Mammary epithelial cell (primary cell): ENCODE measurements at regions of chr5 and their contacts with region 1.

Region 1: GRCh38 chr5:159444441-159445082 is 114.3 kb upstream of the IL12B start:
- DNase-seq: peak; percentile 60
- H3K4me3 ChIP-seq: no peak overlapping the region
- H3K27ac ChIP-seq: no peak overlapping the region
- H3K4me1 ChIP-seq: no peaks in the 10 kb centered on the region
- H3K27me3 ChIP-seq: no peaks in the 10 kb centered on the region
- CTCF ChIP-seq: peak; percentile 30 to 54

Region 2: DNA sequence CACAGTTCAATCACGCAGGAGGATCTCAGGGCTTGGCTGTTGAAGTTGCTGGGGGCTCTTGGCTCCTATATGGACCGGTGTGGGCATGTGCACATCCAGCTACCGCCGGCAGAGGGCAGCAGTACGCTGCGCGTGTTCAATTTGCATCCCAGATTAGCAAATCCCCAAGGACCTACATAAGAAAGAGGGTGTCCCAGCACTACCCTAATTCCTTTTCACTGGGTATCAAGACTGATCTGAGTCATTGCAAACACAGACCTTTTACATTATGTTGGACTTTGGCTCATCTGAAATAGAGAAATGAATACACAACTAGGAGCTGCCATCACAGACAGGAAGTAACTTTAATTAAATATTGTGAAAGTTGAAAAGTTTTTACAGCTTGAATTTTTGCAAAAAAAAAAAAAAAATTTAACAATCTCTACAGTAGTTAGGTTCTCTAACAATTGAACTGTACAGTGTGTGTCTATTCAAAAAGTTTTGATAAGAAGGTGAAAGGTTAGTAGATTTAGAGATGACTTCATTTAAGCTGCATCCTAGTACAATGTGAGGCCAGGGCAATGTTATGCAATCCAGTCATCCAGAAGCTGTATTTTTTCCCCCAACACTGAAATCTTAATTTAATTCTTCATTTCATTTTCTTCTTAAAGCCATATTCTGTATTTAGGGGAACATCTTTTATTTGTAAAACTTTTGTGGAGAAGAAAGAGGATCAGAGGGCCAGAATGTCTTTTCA is 748.8 kb before region 1 on chr5:
- CTCF ChIA-PET with region 1: no interaction called
- dilution Hi-C with region 1: no loop called
- in situ Hi-C with region 1: no loop called
- intact Hi-C with region 1: no loop called
- DNase-seq: peak; percentile 17
- H3K4me3 ChIP-seq: no peak overlapping the region
- H3K27ac ChIP-seq: no peak overlapping the region
- H3K4me1 ChIP-seq: no peaks in the 10 kb centered on the region
- H3K27me3 ChIP-seq: peaks cover 2% of the 10 kb centered on the region
- CTCF ChIP-seq: peak; percentile 90 to 97

Region 3: GRCh38 chr5:159286420-159287035 is 158.0 kb before region 1 on chr5:
- CTCF ChIA-PET with region 1: no interaction called
- dilution Hi-C with region 1: no loop called
- in situ Hi-C with region 1: no loop called
- intact Hi-C with region 1: loop called (anchors 2 kb)
- DNase-seq: peak; percentile 35
- H3K4me3 ChIP-seq: no peak overlapping the region
- H3K27ac ChIP-seq: no peak overlapping the region
- H3K4me1 ChIP-seq: no peaks in the 10 kb centered on the region
- H3K27me3 ChIP-seq: no peaks in the 10 kb centered on the region
- CTCF ChIP-seq: peak; percentile 30 to 57

Region 4: GRCh38 chr5:159331093-159331973 is 113.2 kb before region 1 on chr5:
- CTCF ChIA-PET with region 1: no interaction called
- dilution Hi-C with region 1: no loop called
- in situ Hi-C with region 1: no loop called
- intact Hi-C with region 1: loop called (anchors 1 kb)
- DNase-seq: no peak
- H3K4me3 ChIP-seq: peak overlapping the region; percentile 37 to 56 (median 45)
- H3K27ac ChIP-seq: no peak overlapping the region
- H3K4me1 ChIP-seq: peaks cover 9% of the 10 kb centered on the region
- H3K27me3 ChIP-seq: no peaks in the 10 kb centered on the region
- CTCF ChIP-seq: peak; percentile 56 to 83

Region 5: DNA sequence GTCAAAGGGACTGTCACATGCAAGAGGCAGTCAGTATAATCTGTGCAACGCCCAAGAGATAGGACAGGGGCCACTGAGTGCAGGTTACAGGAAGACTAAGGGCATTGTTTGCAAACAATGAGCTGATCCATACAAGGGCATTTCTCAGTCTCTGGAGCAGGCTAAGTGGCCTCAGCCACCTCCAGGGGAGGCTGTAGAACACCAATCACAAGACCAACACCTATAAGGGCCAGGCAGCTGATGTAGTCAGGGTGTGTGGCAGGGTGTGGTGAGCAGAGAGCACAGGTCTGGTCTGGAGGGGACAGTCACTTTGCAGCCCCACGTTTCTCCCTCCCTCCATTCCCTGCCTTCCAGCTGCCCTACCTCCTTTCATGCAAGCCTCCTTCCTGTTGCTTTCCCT is 388.5 kb after region 1 on chr5:
- CTCF ChIA-PET with region 1: no interaction called
- dilution Hi-C with region 1: no loop called
- in situ Hi-C with region 1: no loop called
- intact Hi-C with region 1: loop called (anchors 10 kb)
- DNase-seq: no peak
- H3K4me3 ChIP-seq: no peak overlapping the region
- H3K27ac ChIP-seq: no peak overlapping the region
- H3K4me1 ChIP-seq: peaks cover 13% of the 10 kb centered on the region
- H3K27me3 ChIP-seq: no peaks in the 10 kb centered on the region
- CTCF ChIP-seq: peak in 1 of 2 donors; percentile 30

Region 6: GRCh38 chr5:159965031-159965837 is 520.7 kb after region 1 on chr5:
- CTCF ChIA-PET with region 1: no interaction called
- dilution Hi-C with region 1: no loop called
- in situ Hi-C with region 1: no loop called
- intact Hi-C with region 1: loop called (anchors 1 kb)
- DNase-seq: peak; percentile 29
- H3K4me3 ChIP-seq: no peak overlapping the region
- H3K27ac ChIP-seq: no peak overlapping the region
- H3K4me1 ChIP-seq: no peaks in the 10 kb centered on the region
- H3K27me3 ChIP-seq: no peaks in the 10 kb centered on the region
- CTCF ChIP-seq: peak; percentile 64 to 78

Region 7: GRCh38 chr5:160390787-160391696 is 946.5 kb after region 1 on chr5:
- CTCF ChIA-PET with region 1: no interaction called
- dilution Hi-C with region 1: no loop called
- in situ Hi-C with region 1: no loop called
- intact Hi-C with region 1: loop called (anchors 5 kb)
- DNase-seq: no peak
- H3K4me3 ChIP-seq: no peak overlapping the region
- H3K27ac ChIP-seq: no peak overlapping the region
- H3K4me1 ChIP-seq: no peaks in the 10 kb centered on the region
- H3K27me3 ChIP-seq: no peaks in the 10 kb centered on the region
- CTCF ChIP-seq: peak; percentile 41 to 45